ENCODE measurements at regions of chr12 and their contacts with region 1.

Region 1: GRCh38 chr12:40068416-40068815 is 37.5 kb downstream of the SLC2A13 start:
- DNase-seq: no peak
- ATAC-seq: no peak
- H3K4me3 ChIP-seq: no peak overlapping the region
- H3K27ac ChIP-seq: no peak overlapping the region
- H3K4me1 ChIP-seq: no peaks in the 10 kb centered on the region
- H3K27me3 ChIP-seq: no peaks in the 10 kb centered on the region
- CTCF ChIP-seq: no peak
- EP300 ChIP-seq: no peak
- POLR2A ChIP-seq: no peak
- RAD21 ChIP-seq: no peak

Region 2: GRCh38 chr12:40054554-40055227 is 13.7 kb before region 1 on chr12:
- CTCF ChIA-PET with region 1: interaction called, 5 read pairs
- POLR2A ChIA-PET with region 1: interaction called, 3 read pairs
- RAD21 ChIA-PET with region 1: interaction called, 3 read pairs
- SMC1A ChIA-PET with region 1: interaction called, 13 read pairs
- in situ Hi-C with region 1: no loop called
- intact Hi-C with region 1: no loop called
- DNase-seq: no peak
- ATAC-seq: no peak
- H3K4me3 ChIP-seq: no peak overlapping the region
- H3K27ac ChIP-seq: no peak overlapping the region
- H3K4me1 ChIP-seq: no peaks in the 10 kb centered on the region
- H3K27me3 ChIP-seq: no peaks in the 10 kb centered on the region; a peak in 1 of 4 replicates
- CTCF ChIP-seq: no peak
- EP300 ChIP-seq: no peak
- POLR2A ChIP-seq: no peak
- RAD21 ChIP-seq: no peak

Region 3: DNA sequence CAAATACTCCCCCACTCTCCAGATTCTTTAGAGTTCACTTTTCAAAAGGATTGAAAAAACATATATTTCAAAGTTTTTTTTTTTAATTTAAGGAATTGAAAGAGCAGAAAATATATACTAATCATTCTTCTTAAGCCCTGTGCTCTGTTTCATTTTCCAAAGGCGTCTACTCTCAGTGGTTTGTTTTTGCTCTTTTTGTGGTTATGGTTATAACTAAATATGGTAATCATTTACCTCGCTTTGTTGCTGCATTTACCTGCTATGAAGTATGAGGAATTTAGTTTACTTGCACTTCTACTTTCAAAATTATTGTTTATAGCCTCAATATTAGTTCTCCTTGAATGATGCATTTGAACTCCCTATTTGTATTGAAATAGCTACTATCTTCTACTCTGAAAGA is 100.5 kb after region 1 on chr12:
- CTCF ChIA-PET with region 1: no interaction called
- POLR2A ChIA-PET with region 1: no interaction called
- RAD21 ChIA-PET with region 1: no interaction called
- SMC1A ChIA-PET with region 1: no interaction called
- in situ Hi-C with region 1: no loop called
- intact Hi-C with region 1: no loop called
- DNase-seq: peak; percentile 55
- ATAC-seq: peak; percentile 94
- H3K4me3 ChIP-seq: 0 out of 2 replicates have a peak overlapping the region, but pooled peaks have one; percentile 9
- H3K27ac ChIP-seq: peak overlapping the region; percentile 56; the same call in 1 of the 2 replicates
- H3K4me1 ChIP-seq: peaks cover 10% of the 10 kb centered on the region
- H3K27me3 ChIP-seq: peaks cover 0 to 2% of the 10 kb centered on the region in 2 experiments; a peak in 1 of 4 replicates
- CTCF ChIP-seq: no peak
- EP300 ChIP-seq: peak; percentile 66 to 91
- POLR2A ChIP-seq: no peak
- RAD21 ChIP-seq: no peak